OCI-LY7 (cell line): ENCODE measurements at regions of chr5 and their contacts with region 1.

Region 1: DNA sequence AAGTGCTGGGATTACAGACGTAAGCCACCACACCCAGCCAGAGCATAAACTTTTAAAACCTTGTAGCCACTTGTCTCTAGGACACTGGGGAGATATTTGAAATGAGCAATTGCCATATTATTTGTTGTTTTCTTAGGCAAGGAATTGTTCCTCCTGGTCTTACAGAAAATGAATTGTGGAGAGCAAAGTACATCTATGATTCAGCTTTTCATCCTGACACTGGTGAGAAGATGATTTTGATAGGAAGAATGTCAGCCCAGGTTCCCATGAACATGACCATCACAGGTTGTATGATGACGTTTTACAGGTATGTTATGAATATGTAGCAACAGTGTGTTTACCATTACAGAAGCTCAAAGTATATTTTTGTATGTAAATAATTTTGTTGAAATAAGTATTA is 30.5 kb downstream of the SFXN1 start:
- DNase-seq: no peak
- H3K4me3 ChIP-seq: no peak overlapping the region
- H3K27ac ChIP-seq: no peak overlapping the region
- H3K4me1 ChIP-seq: no peaks in the 10 kb centered on the region
- CTCF ChIP-seq: no peak

Region 2: GRCh38 chr5:175246242-175246888 is 262.5 kb before region 1 on chr5:
- CTCF ChIA-PET with region 1: no interaction called
- POLR2A ChIA-PET with region 1: no interaction called
- intact Hi-C with region 1: no loop called
- DNase-seq: no peak
- H3K4me3 ChIP-seq: no peak overlapping the region
- H3K27ac ChIP-seq: no peak overlapping the region
- H3K4me1 ChIP-seq: no peaks in the 10 kb centered on the region
- CTCF ChIP-seq: no peak

Region 3: GRCh38 chr5:175494280-175495183 is 14.4 kb before region 1 on chr5:
- CTCF ChIA-PET with region 1: no interaction called
- POLR2A ChIA-PET with region 1: interaction called, 11 read pairs
- intact Hi-C with region 1: no loop called
- DNase-seq: no peak
- H3K4me3 ChIP-seq: no peak overlapping the region
- H3K27ac ChIP-seq: no peak overlapping the region
- H3K4me1 ChIP-seq: no peaks in the 10 kb centered on the region
- CTCF ChIP-seq: no peak